ENCODE measurements at regions of chr6 and their contacts with region 1.

Region 1: DNA sequence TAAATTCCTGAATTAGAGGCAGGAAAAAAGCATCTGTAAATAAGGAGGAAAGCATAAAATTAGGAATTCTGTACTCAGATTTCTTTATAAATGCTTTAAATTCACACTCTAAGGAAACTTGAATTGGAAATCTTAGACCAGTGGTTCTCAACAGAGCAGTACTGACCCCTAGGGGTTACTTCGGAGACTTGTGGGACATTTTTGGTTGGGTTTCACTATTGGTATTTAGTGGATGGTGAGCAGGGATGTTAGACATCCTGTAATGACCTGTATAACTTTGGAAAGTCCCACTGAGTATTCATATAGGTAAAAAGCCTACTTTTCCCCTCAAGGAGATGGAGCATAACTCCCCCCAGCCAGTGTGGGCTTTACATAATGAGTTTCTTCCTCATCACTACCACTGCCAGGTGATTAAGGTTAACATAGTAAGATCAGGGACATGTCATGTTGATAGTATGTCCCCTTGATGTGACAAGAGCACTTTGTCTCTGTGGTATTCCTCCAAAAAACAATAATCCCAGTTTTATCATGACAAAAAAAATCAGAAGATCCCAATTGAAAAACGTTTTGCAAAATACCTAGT is 31.0 kb downstream of the GLO1 start:
- DNase-seq: peak; percentile 28
- ATAC-seq: peak; percentile 92
- H3K4me3 ChIP-seq: no peak overlapping the region
- H3K27ac ChIP-seq: no peak overlapping the region
- H3K4me1 ChIP-seq: no peaks in the 10 kb centered on the region
- H3K27me3 ChIP-seq: no peaks in the 10 kb centered on the region
- CTCF ChIP-seq: peak; percentile 43 to 84 (median 77); a peak in 5 of 6 replicates
- POLR2A ChIP-seq: no peak
- RAD21 ChIP-seq: peak; percentile 74

Region 2: GRCh38 chr6:38027685-38028373 is 644.1 kb before region 1 on chr6:
- CTCF ChIA-PET with region 1: no interaction called
- POLR2A ChIA-PET with region 1: no interaction called
- RAD21 ChIA-PET with region 1: no interaction called
- intact Hi-C with region 1: loop called (anchors 10 kb)
- DNase-seq: no peak
- ATAC-seq: no peak
- H3K4me3 ChIP-seq: no peak overlapping the region
- H3K27ac ChIP-seq: no peak overlapping the region
- H3K4me1 ChIP-seq: no peaks in the 10 kb centered on the region
- H3K27me3 ChIP-seq: no peaks in the 10 kb centered on the region
- CTCF ChIP-seq: no peak
- POLR2A ChIP-seq: no peak
- RAD21 ChIP-seq: no peak

Region 3: GRCh38 chr6:38161754-38162492 is 510.1 kb before region 1 on chr6:
- CTCF ChIA-PET with region 1: no interaction called
- POLR2A ChIA-PET with region 1: no interaction called
- RAD21 ChIA-PET with region 1: no interaction called
- intact Hi-C with region 1: no loop called
- DNase-seq: no peak
- ATAC-seq: no peak
- H3K4me3 ChIP-seq: no peak overlapping the region
- H3K27ac ChIP-seq: no peak overlapping the region
- H3K4me1 ChIP-seq: no peaks in the 10 kb centered on the region
- H3K27me3 ChIP-seq: no peaks in the 10 kb centered on the region
- CTCF ChIP-seq: no peak
- POLR2A ChIP-seq: no peak
- RAD21 ChIP-seq: no peak

Region 4: GRCh38 chr6:38364128-38364527 is 307.8 kb before region 1 on chr6:
- CTCF ChIA-PET with region 1: no interaction called
- POLR2A ChIA-PET with region 1: no interaction called
- RAD21 ChIA-PET with region 1: no interaction called
- intact Hi-C with region 1: no loop called
- DNase-seq: no peak
- ATAC-seq: no peak
- H3K4me3 ChIP-seq: no peak overlapping the region
- H3K27ac ChIP-seq: no peak overlapping the region
- H3K4me1 ChIP-seq: peaks cover under 1 to 3% of the 10 kb centered on the region in 2 experiments; a peak in 2 of 4 replicates
- H3K27me3 ChIP-seq: no peaks in the 10 kb centered on the region
- CTCF ChIP-seq: no peak
- POLR2A ChIP-seq: no peak
- RAD21 ChIP-seq: no peak

Region 5: DNA sequence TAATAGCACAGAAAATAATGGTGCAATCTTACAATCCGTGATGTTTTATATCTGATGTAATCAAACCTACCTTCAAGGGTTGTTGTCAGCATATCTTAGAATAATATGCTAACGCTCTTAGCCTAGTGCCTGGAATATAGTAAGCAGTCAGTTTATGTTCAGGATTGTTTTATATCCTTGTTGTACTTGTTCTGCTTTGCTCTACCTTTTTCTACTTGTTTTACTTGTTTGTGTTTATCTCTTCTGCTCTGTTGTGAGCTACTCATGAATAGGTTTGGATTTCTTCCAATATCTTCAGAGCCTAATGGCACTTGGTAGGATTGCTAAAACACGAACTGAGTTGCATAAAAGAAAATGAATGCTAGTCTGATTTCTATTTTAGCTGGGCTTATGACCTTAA is 83.2 kb after region 1 on chr6:
- CTCF ChIA-PET with region 1: no interaction called
- POLR2A ChIA-PET with region 1: no interaction called
- RAD21 ChIA-PET with region 1: no interaction called
- intact Hi-C with region 1: no loop called
- DNase-seq: peak; percentile 32
- ATAC-seq: peak; percentile 57; the same call in 1 of the 2 replicates
- H3K4me3 ChIP-seq: 0 out of 4 replicates have a peak overlapping the region, but pooled peaks of 1 of the 2 experiments have one; percentile 11
- H3K27ac ChIP-seq: no peak overlapping the region
- H3K4me1 ChIP-seq: peaks cover 13 to 20% of the 10 kb centered on the region in 2 experiments
- H3K27me3 ChIP-seq: no peaks in the 10 kb centered on the region
- CTCF ChIP-seq: no peak
- POLR2A ChIP-seq: no peak
- RAD21 ChIP-seq: peak; percentile 13; the same call in 1 of the 2 replicates

Measured in HCT116 (cell line).